PC-9 (cell line): ENCODE measurements at regions of chr16 and their contacts with region 1.

Region 1: DNA sequence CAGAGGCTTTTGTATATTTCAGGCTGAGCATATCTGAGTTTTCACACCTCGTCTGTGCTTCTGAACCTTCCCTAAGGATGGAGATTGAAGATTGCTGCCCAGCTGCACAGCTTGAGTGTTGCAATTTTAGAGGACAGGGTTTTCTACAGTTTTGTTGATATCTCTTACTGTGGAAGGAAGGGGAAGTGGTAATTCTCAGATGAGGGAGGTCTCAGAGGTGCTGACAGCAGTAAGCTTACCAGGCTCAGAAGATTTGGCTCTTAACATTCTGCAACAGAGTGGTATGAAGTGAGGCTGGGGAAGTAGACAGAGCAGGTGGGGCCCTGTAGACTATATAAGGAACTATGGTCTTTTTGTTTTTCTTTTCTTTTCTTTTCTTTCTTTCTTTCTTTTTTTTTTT is 45.8 kb upstream of the ARHGAP17 start:
- DNase-seq: no peak
- H3K4me3 ChIP-seq: no peak overlapping the region
- H3K27ac ChIP-seq: no peak overlapping the region
- H3K4me1 ChIP-seq: no peaks in the 10 kb centered on the region
- H3K27me3 ChIP-seq: no peaks in the 10 kb centered on the region
- CTCF ChIP-seq: no peak

Region 2: GRCh38 chr16:25020112-25020631 is 40.7 kb before region 1 on chr16:
- CTCF ChIA-PET with region 1: no interaction called
- POLR2A ChIA-PET with region 1: no interaction called
- intact Hi-C with region 1: no loop called
- DNase-seq: no peak
- H3K4me3 ChIP-seq: no peak overlapping the region
- H3K27ac ChIP-seq: no peak overlapping the region
- H3K4me1 ChIP-seq: no peaks in the 10 kb centered on the region
- H3K27me3 ChIP-seq: no peaks in the 10 kb centered on the region
- CTCF ChIP-seq: no peak

Region 3: DNA sequence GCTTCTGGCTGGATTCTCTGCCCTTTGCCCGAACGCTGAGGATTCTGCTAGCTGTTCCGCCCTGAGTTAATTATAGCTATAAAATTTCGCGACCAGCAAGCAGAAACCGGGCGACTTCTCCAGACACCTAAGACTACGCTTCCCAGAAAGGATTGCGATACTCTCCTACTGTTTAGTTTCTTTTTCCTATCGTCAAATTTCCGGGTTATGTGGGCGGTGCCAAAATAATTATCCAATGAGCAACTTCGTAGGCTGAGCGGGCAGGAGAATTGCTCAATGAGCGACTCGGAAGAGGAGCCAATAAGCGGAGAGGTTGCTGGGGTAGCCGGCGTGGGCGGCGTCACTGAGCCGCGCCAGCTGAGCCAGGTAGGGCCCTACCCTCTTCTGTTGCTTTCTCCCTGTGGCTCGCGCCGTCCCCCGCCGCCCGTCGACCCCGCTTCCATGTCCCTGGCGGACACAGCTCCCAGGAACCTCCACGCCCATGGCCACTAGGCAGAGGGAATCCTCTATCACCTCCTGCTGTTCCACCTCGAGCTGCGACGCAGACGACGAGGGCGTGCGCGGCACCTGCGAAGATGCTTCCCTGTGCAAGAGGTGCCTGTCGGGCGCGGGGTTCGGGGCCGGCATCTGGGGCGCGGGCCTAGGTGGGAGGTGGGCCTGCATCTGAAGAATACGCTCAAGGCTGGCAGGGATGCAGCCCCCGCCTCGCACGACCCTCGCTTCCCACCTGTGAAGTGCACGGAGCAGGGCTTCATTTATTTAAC is 50.7 kb after region 1 on chr16 and contains the start of gene LCMT1:
- CTCF ChIA-PET with region 1: interaction called, 3 read pairs
- POLR2A ChIA-PET with region 1: interaction called, 13 read pairs
- intact Hi-C with region 1: loop called (anchors 2 kb)
- DNase-seq: peak; percentile 92 to 96
- H3K4me3 ChIP-seq: peak within 1 kb of the TSS; percentile 74
- H3K27ac ChIP-seq: peak within 1 kb of the TSS; percentile 82
- H3K4me1 ChIP-seq: peaks cover 29% of the 10 kb centered on the region
- H3K27me3 ChIP-seq: no peaks in the 10 kb centered on the region
- CTCF ChIP-seq: no peak
- total RNA-seq, gene LCMT1: 67.1 and 113 TPM in 2 replicates

Region 4: GRCh38 chr16:25413985-25414384 is 353.1 kb after region 1 on chr16:
- CTCF ChIA-PET with region 1: no interaction called
- POLR2A ChIA-PET with region 1: no interaction called
- intact Hi-C with region 1: no loop called
- DNase-seq: peak in 1 of 2 experiments; percentile 62
- H3K4me3 ChIP-seq: no peak overlapping the region
- H3K27ac ChIP-seq: no peak overlapping the region
- H3K4me1 ChIP-seq: no peaks in the 10 kb centered on the region
- H3K27me3 ChIP-seq: peaks cover 11% of the 10 kb centered on the region; the same call in 1 of the 2 replicates
- CTCF ChIP-seq: no peak

Region 5: GRCh38 chr16:25585526-25585925 is 524.6 kb after region 1 on chr16:
- CTCF ChIA-PET with region 1: no interaction called
- POLR2A ChIA-PET with region 1: no interaction called
- intact Hi-C with region 1: no loop called
- DNase-seq: no peak
- H3K4me3 ChIP-seq: no peak overlapping the region
- H3K27ac ChIP-seq: no peak overlapping the region
- H3K4me1 ChIP-seq: no peaks in the 10 kb centered on the region
- H3K27me3 ChIP-seq: no peaks in the 10 kb centered on the region
- CTCF ChIP-seq: no peak